ENCODE measurements at regions of chrX and their contacts with region 1.

Region 1: GRCh38 chrX:71095543-71095911 is at the start of gene FOXO4:
- DNase-seq: peak; percentile 85
- ATAC-seq: peak; percentile 92
- H3K4me3 Mint-ChIP-seq: peak within 1 kb of the TSS; percentile 90
- H3K27ac Mint-ChIP-seq: peak within 1 kb of the TSS; percentile 89
- H3K4me1 Mint-ChIP-seq: peaks cover 20% of the 10 kb centered on the region
- H3K27me3 Mint-ChIP-seq: no peaks in the 10 kb centered on the region
- total RNA-seq, gene FOXO4: 22.1 to 24.9 TPM

Region 2: GRCh38 chrX:71111141-71111843 is 15.8 kb after region 1 on chrX and contains the start of gene IL2RG:
- POLR2A ChIA-PET with region 1: interaction called, 106 read pairs
- DNase-seq: peak; percentile 53
- ATAC-seq: peak; percentile 80
- H3K4me3 Mint-ChIP-seq: peak within 1 kb of the TSS; percentile 99
- H3K27ac Mint-ChIP-seq: peak within 1 kb of the TSS; percentile 95
- H3K4me1 Mint-ChIP-seq: peaks cover 30% of the 10 kb centered on the region
- H3K27me3 Mint-ChIP-seq: no peaks in the 10 kb centered on the region
- total RNA-seq, gene IL2RG: 389 to 395 TPM

Region 3: DNA sequence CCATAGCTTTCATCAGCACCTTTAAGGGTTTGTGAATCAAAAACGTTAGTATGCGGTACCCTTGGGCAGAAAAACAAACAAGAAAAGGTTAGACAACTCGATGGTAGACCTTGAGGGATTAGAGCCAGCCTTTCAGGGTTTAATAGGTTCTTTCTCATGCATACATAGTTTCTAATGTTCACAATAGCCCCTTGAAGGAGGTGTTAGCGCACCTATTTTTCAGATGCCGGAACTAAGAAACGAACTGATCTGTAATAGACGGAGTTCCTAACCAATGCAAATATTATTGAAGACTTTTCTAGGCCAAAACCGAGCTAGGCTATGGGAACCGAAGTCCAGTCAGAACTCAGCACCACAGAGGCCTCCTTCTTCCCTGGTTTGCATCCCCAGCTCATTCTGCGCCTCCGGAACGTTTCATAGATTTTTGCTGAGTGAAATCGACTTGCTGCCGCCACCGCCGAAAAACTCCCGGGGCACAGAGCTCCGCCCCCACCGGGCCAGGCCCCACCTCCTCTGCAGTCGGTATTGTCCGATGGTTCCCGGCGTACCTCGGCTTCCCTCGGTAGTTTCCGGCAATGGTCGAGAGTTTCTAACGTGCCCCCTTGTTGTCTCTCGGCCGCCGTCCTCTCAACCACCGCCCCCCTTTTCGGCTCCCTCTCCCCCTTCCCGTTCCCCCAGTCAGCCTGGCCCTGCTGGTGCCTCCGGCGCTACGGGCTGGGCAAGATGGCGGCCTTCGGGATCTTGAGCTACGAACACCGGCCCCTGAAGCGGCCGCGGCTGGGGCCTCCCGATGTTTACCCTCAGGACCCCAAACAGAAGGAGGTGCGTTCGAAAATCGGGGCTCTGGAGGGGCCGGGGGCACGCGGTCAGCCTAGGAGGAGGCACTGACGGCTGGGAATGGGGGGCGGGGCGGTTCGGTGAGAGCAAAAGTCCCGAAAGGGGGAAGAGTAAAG is 22.8 kb after region 1 on chrX and contains the start of gene MED12:
- POLR2A ChIA-PET with region 1: interaction called, 106 read pairs
- DNase-seq: peak; percentile 83
- ATAC-seq: peak; percentile 93
- H3K4me3 Mint-ChIP-seq: peak within 1 kb of the TSS; percentile 82
- H3K27ac Mint-ChIP-seq: peak within 1 kb of the TSS; percentile 86
- H3K4me1 Mint-ChIP-seq: peaks cover 14% of the 10 kb centered on the region
- H3K27me3 Mint-ChIP-seq: no peaks in the 10 kb centered on the region
- total RNA-seq, gene MED12: 64.7 to 77.1 TPM